ENCODE measurements at regions of chr10 and their contacts with region 1.

Region 1: GRCh38 chr10:92619368-92619767 is 26.4 kb downstream of the KIF11 start:
- DNase-seq: no peak
- ATAC-seq: no peak
- H3K4me3 ChIP-seq: no peak overlapping the region
- H3K27ac ChIP-seq: no peak overlapping the region
- H3K4me1 ChIP-seq: 0 out of 2 replicates have a peak, but pooled peaks cover 1% of the 10 kb centered on the region
- H3K27me3 ChIP-seq: no peaks in the 10 kb centered on the region
- CTCF ChIP-seq: no peak
- POLR2A ChIP-seq: no peak
- RAD21 ChIP-seq: no peak

Region 2: DNA sequence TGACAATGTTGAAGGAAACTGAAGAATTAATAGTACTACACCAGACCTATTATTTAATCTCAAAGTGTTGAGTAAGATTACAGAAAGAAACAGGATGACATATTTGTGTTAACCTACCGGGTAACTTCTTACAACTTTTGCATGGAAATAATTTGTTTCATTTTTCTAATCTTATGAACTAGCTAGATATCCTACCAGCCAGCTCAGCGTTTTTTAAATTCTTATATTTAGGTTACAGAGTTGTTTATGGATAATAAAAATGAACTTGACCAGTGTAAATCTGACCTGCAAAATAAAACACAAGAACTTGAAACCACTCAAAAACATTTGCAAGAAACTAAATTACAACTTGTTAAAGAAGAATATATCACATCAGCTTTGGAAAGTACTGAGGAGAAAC is 10.6 kb after region 1 on chr10:
- CTCF ChIA-PET with region 1: no interaction called
- POLR2A ChIA-PET with region 1: no interaction called
- dilution Hi-C with region 1: no loop called
- in situ Hi-C with region 1: no loop called
- intact Hi-C with region 1: loop called (anchors 2 kb)
- DNase-seq: no peak
- ATAC-seq: no peak
- H3K4me3 ChIP-seq: no peak overlapping the region
- H3K27ac ChIP-seq: no peak overlapping the region
- H3K4me1 ChIP-seq: no peaks in the 10 kb centered on the region
- H3K27me3 ChIP-seq: no peaks in the 10 kb centered on the region
- CTCF ChIP-seq: no peak
- POLR2A ChIP-seq: no peak
- RAD21 ChIP-seq: no peak

Measured in IMR-90 (cell line).